ENCODE measurements at regions of chr2 and their contacts with region 1.

Region 1: GRCh38 chr2:27428213-27428977 is at the start of gene NRBP1:
- DNase-seq: peak; percentile 71 to 96
- H3K4me3 ChIP-seq: peak within 1 kb of the TSS; percentile 83 to 94 (median 91)
- H3K27ac ChIP-seq: peak within 1 kb of the TSS; percentile 85
- H3K4me1 ChIP-seq: no peaks in the 10 kb centered on the region; a peak in 2 of 7 replicates
- H3K27me3 ChIP-seq: no peaks in the 10 kb centered on the region
- CTCF ChIP-seq: peak in 1 of 3 experiments; percentile 11; a peak in 1 of 4 replicates
- EP300 ChIP-seq: peak in 1 of 2 experiments; percentile 34; a peak in 1 of 3 replicates
- POLR2A ChIP-seq: peak; percentile 61 to 80
- RAD21 ChIP-seq: no peak
- total RNA-seq, gene NRBP1: 115 TPM in 2 replicates

Region 2: DNA sequence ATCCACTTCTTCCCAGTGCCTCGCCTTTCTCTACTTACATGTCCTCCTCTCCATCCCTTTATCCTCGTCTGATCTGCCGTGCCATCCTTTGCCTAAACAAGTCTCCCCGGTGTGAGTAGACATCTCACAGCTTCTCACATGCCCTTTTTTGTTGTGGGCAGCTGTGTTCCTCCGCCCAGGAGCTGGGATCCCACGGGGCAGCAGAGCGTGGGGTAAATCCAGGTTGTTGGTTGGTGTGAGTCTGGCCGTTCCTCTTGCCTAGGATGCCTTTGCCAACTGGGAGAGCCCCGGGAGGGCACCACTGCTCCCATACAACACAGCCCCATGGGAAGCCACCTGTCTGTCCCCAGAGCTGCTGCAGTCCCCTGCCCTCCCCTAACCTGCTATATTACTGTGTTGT is 188.0 kb before region 1 on chr2:
- CTCF ChIA-PET with region 1: no interaction called
- POLR2A ChIA-PET with region 1: no interaction called
- DNase-seq: no peak
- H3K4me3 ChIP-seq: no peak overlapping the region
- H3K27ac ChIP-seq: no peak overlapping the region
- H3K4me1 ChIP-seq: no peaks in the 10 kb centered on the region
- H3K27me3 ChIP-seq: no peaks in the 10 kb centered on the region
- CTCF ChIP-seq: no peak
- EP300 ChIP-seq: no peak
- POLR2A ChIP-seq: no peak
- RAD21 ChIP-seq: no peak

Region 3: DNA sequence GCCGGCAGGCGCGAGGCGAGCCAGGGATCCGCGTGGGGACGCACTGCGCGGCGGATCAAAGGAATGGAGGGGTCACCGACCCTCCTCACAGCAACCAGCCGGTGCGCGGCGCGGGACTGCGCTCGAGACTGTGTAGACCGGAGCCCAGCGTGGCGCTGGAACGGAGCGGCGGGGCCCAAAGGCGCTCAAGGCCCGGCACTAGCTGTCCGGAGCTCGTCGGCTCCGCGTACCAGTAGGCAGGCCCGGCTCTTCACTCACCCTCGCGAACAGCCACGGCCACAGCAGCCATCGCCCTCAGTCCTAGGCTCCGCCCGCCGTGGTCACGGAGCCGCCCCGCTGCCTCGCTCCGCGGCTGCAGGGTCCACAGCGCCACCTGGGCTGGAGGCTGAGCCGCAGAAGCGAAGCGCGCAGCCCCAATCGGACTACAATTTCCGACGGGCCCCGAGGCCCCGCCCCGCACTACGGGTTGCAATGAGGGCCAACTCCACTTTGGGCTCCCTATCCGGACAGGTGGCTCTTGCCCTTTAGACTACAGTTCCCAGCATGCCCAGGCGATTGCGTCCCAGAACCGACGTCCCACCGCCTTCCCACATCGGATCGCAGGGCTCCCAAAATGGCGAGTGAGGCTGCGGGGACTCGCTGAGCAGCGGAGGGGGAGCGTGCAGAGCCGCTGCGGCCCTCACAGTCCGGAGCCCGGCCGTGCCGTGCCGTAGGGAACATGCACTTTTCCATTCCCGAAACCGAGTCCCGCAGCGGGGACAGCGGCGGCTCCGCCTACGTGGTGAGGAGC is 58.2 kb before region 1 on chr2 and contains the starts of genes EIF2B4 and SNX17:
- CTCF ChIA-PET with region 1: interaction called, 6 read pairs
- POLR2A ChIA-PET with region 1: interaction called, 10 read pairs
- DNase-seq: peak; percentile 98 to 99
- H3K4me3 ChIP-seq: peak within 1 kb of the TSS; percentile 72 to 99 (median 88)
- H3K27ac ChIP-seq: peak within 1 kb of the TSS; percentile 62
- H3K4me1 ChIP-seq: peaks cover 0 to 4% (median 2%) of the 10 kb centered on the region in 4 experiments; a peak in 4 of 7 replicates
- H3K27me3 ChIP-seq: no peaks in the 10 kb centered on the region
- CTCF ChIP-seq: peak in 2 of 3 experiments; percentile 71 to 87; a peak in 3 of 4 replicates
- EP300 ChIP-seq: peak in 1 of 2 experiments; percentile 42; a peak in 1 of 3 replicates
- POLR2A ChIP-seq: peak in 1 of 2 experiments; percentile 84; a peak in 2 of 3 replicates
- RAD21 ChIP-seq: peak; percentile 50 to 58; a peak in 3 of 4 replicates
- total RNA-seq, gene EIF2B4: 63.2 and 66.0 TPM in 2 replicates
- total RNA-seq, gene SNX17: 54.9 and 59.1 TPM in 2 replicates

Region 4: GRCh38 chr2:27380626-27381545 is 47.5 kb before region 1 on chr2 and contains the start of gene ZNF513:
- CTCF ChIA-PET with region 1: interaction called, 3 read pairs
- POLR2A ChIA-PET with region 1: interaction called, 11 read pairs
- DNase-seq: peak; percentile 91 to 94
- H3K4me3 ChIP-seq: peak within 1 kb of the TSS; percentile 65 to 96 (median 82)
- H3K27ac ChIP-seq: peak within 1 kb of the TSS; percentile 93
- H3K4me1 ChIP-seq: peaks cover 0 to 8% (median 2%) of the 10 kb centered on the region in 4 experiments; a peak in 5 of 7 replicates
- H3K27me3 ChIP-seq: no peaks in the 10 kb centered on the region
- CTCF ChIP-seq: no peak
- EP300 ChIP-seq: peak; percentile 15 to 94
- POLR2A ChIP-seq: peak in 1 of 2 experiments; percentile 84; a peak in 2 of 3 replicates
- RAD21 ChIP-seq: peak in 1 of 2 experiments; percentile 5; a peak in 1 of 4 replicates
- total RNA-seq, gene ZNF513: 17.3 and 18.8 TPM in 2 replicates

Region 5: DNA sequence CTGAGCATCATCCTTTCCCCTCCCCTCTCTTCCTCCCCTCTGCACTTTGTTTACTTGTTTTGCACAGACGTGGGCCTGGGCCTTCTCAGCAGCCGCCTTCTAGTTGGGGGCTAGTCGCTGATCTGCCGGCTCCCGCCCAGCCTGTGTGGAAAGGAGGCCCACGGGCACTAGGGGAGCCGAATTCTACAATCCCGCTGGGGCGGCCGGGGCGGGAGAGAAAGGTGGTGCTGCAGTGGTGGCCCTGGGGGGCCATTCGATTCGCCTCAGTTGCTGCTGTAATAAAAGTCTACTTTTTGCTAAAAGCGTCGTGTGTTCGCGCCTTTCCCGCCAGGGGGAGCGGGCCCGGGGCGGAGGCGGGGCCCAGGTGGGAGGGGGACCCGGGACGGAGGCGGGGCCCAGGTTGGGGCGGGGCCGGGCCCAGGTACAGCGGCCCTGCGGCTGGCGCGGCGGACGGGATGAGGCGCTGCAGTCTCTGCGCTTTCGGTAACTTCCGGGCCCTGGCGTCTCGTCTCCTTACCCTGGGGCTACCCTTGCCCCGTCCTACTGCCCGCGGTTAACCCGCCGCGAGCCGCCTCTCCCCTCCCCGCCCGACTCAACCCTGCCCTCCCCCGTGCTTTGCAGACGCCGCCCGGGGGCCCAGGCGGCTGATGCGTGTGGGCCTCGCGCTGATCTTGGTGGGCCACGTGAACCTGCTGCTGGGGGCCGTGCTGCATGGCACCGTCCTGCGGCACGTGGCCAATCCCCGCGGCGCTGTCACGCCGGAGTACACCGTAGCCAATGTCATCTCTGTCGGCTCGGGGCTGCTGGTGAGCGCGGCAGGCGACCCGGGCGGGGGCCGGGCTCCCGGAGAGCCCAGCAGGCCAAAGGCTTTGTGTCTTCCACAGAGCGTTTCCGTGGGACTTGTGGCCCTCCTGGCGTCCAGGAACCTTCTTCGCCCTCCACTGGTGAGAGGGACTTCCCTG is 13.8 kb after region 1 on chr2 and contains the start of gene KRTCAP3:
- CTCF ChIA-PET with region 1: interaction called, 24 read pairs
- POLR2A ChIA-PET with region 1: interaction called, 19 read pairs
- DNase-seq: peak; percentile 53 to 94
- H3K4me3 ChIP-seq: peak within 1 kb of the TSS; percentile 49 to 76 (median 63)
- H3K27ac ChIP-seq: no peak within 1 kb of the TSS
- H3K4me1 ChIP-seq: peaks cover 0 to 14% (median 8%) of the 10 kb centered on the region in 4 experiments; a peak in 5 of 7 replicates
- H3K27me3 ChIP-seq: no peaks in the 10 kb centered on the region
- CTCF ChIP-seq: peak; percentile 9 to 66 (median 62)
- EP300 ChIP-seq: no peak
- POLR2A ChIP-seq: peak; percentile 40 to 57; a peak in 2 of 3 replicates
- RAD21 ChIP-seq: peak; percentile 26 to 42; a peak in 2 of 4 replicates
- total RNA-seq, gene KRTCAP3: 50.1 and 55.4 TPM in 2 replicates

Region 6: GRCh38 chr2:27448381-27448780 is 20.0 kb after region 1 on chr2:
- CTCF ChIA-PET with region 1: interaction called, 4 read pairs
- POLR2A ChIA-PET with region 1: interaction called, 17 read pairs
- DNase-seq: no peak
- H3K4me3 ChIP-seq: no peak overlapping the region
- H3K27ac ChIP-seq: no peak overlapping the region
- H3K4me1 ChIP-seq: peaks cover 0 to under 1% (median 0%) of the 10 kb centered on the region in 4 experiments; a peak in 2 of 7 replicates
- H3K27me3 ChIP-seq: no peaks in the 10 kb centered on the region
- CTCF ChIP-seq: no peak
- EP300 ChIP-seq: no peak
- POLR2A ChIP-seq: no peak
- RAD21 ChIP-seq: no peak